ENCODE measurements at regions of chr10 and their contacts with region 1.

Region 1: DNA sequence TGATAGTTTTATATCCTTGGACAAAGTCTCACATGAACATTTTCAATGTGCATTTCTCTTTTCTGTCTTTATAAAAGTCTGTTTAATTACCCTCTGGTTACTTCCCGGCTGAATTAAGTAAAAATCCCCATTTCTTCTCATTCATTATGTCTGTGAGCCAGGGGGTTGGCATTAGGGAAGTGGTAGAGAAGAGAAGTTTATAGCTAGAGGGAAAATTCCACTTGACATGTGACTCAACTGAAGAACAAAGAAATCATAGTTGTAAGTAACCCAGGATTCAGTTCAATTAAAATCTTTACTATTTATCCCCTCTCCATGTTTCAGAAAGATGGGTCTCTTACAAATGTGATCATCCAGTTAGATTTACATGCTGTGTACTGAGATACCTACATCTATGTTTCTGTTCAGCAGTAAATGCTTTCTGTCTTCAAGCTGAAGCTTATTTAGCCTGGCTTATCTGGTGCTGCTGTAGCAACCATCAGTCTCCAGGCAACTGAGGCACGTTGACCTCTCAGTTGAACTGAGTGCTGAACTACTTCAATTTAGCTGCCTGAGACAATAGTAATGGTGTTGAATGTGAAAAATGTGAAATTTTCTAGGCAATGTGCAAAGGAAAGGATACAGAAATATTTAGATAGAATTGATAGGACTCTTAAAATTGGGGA is 181.6 kb downstream of the MLLT10 start:
- DNase-seq: no peak
- H3K4me3 ChIP-seq: no peak overlapping the region
- H3K27ac ChIP-seq: no peak overlapping the region
- H3K4me1 ChIP-seq: no peaks in the 10 kb centered on the region
- H3K27me3 ChIP-seq: no peaks in the 10 kb centered on the region
- CTCF ChIP-seq: no peak
- POLR2A ChIP-seq: no peak

Region 2: DNA sequence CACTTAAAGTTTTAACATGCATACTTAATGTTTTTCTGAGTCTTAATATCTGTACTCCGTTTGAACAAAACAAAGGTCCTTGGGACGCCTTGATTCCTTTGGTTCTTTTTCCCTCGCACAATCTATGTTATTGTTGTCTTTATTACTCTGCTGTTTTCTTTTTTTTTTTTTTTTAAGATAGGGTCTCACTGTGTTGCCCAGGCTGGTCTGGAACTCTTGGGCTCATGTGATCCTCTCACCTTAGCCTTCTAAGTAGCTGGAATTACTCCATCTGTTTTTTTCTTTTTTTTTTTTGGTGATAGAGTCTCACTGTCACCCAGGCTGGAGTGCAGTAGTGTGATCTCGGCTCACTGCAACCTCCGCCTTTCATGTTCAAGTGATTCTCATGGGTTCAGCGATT is 168.4 kb before region 1 on chr10:
- intact Hi-C with region 1: loop called in 1 of 2 experiments (anchors 10 kb)
- DNase-seq: no peak
- H3K4me3 ChIP-seq: no peak overlapping the region
- H3K27ac ChIP-seq: no peak overlapping the region
- H3K4me1 ChIP-seq: peaks cover 3 to 6% of the 10 kb centered on the region in 2 donors
- H3K27me3 ChIP-seq: no peaks in the 10 kb centered on the region
- CTCF ChIP-seq: no peak
- POLR2A ChIP-seq: no peak

Region 3: DNA sequence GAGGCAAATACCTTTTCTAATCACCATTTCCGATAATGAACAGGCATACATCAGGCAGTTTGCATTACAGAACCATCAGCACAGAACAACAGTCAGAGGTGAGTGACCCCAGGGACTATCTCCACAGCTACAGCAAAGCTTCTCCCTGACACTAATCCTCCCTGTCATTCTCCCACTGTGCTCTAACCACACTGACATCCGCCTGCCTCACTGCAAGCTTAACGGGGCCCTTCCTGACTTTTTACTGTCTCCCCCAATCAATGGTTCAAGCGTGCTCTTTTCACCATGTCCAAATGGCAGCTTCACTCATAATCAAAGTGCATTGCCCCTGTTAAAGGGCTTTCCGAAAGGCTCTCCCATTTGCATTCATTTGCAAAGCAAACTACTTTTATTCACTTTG is 91.5 kb after region 1 on chr10:
- intact Hi-C with region 1: no loop called
- DNase-seq: no peak
- H3K4me3 ChIP-seq: no peak overlapping the region
- H3K27ac ChIP-seq: no peak overlapping the region
- H3K4me1 ChIP-seq: no peaks in the 10 kb centered on the region
- H3K27me3 ChIP-seq: no peaks in the 10 kb centered on the region
- CTCF ChIP-seq: no peak
- POLR2A ChIP-seq: no peak

Region 4: GRCh38 chr10:22414146-22414545 is 698.5 kb after region 1 on chr10:
- intact Hi-C with region 1: no loop called
- DNase-seq: no peak
- H3K4me3 ChIP-seq: no peak overlapping the region
- H3K27ac ChIP-seq: no peak overlapping the region
- H3K4me1 ChIP-seq: no peaks in the 10 kb centered on the region
- H3K27me3 ChIP-seq: no peaks in the 10 kb centered on the region
- CTCF ChIP-seq: no peak
- POLR2A ChIP-seq: no peak